B cell (primary cell): ENCODE measurements at regions of chr11 and their contacts with region 1.

Region 1: GRCh38 chr11:118145285-118146227 is 7.1 kb downstream of the SCN4B start:
- DNase-seq: peak; percentile 85
- ATAC-seq: peak; percentile 98
- H3K4me3 ChIP-seq: peak overlapping the region; percentile 15 to 76 (median 61)
- H3K4me3 Mint-ChIP-seq: peak overlapping the region; percentile 87
- H3K27ac ChIP-seq: no peak overlapping the region
- H3K27ac Mint-ChIP-seq: no peak overlapping the region
- H3K4me1 ChIP-seq: peaks cover 0 to 6% of the 10 kb centered on the region in 2 donors
- H3K4me1 Mint-ChIP-seq: peaks cover 7% of the 10 kb centered on the region
- H3K27me3 ChIP-seq: peaks cover 0 to 70% (median 25%) of the 10 kb centered on the region in 4 experiments
- H3K27me3 Mint-ChIP-seq: peaks cover 77% of the 10 kb centered on the region
- CTCF ChIP-seq: peak; percentile 83

Region 2: DNA sequence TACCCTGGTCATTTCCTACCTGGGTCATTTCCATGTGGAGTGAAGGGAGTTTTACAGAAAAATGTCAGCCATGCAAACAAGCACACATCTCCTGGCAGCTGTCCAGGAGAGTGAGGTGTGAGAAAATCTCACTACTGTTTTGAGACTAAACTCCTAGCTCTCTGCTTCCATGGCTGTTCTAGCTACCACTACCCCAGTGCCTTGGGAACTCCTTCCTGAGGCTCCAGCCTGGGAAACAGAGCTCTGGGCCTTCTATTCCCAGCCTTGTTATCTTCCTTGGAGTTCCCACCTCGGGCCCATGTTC is 213.5 kb before region 1 on chr11:
- CTCF ChIA-PET with region 1: no interaction called
- POLR2A ChIA-PET with region 1: no interaction called
- intact Hi-C with region 1: no loop called
- DNase-seq: no peak
- ATAC-seq: no peak
- H3K4me3 ChIP-seq: no peak overlapping the region
- H3K4me3 Mint-ChIP-seq: no peak overlapping the region
- H3K27ac ChIP-seq: no peak overlapping the region
- H3K27ac Mint-ChIP-seq: no peak overlapping the region
- H3K4me1 ChIP-seq: peaks cover 11 to 20% of the 10 kb centered on the region in 2 donors
- H3K4me1 Mint-ChIP-seq: peaks cover 16% of the 10 kb centered on the region
- H3K27me3 ChIP-seq: no peaks in the 10 kb centered on the region
- H3K27me3 Mint-ChIP-seq: peaks cover 9% of the 10 kb centered on the region
- CTCF ChIP-seq: no peak

Region 3: GRCh38 chr11:117997823-117998579 is 147.6 kb before region 1 on chr11:
- CTCF ChIA-PET with region 1: no interaction called
- POLR2A ChIA-PET with region 1: no interaction called
- intact Hi-C with region 1: no loop called
- DNase-seq: no peak
- ATAC-seq: no peak
- H3K4me3 ChIP-seq: no peak overlapping the region
- H3K4me3 Mint-ChIP-seq: no peak overlapping the region
- H3K27ac ChIP-seq: peak overlapping the region; percentile 7 to 52
- H3K27ac Mint-ChIP-seq: peak overlapping the region; percentile 85
- H3K4me1 ChIP-seq: peaks cover 19 to 28% of the 10 kb centered on the region in 2 donors
- H3K4me1 Mint-ChIP-seq: peaks cover 54% of the 10 kb centered on the region
- H3K27me3 ChIP-seq: no peaks in the 10 kb centered on the region
- H3K27me3 Mint-ChIP-seq: no peaks in the 10 kb centered on the region
- CTCF ChIP-seq: no peak

Region 4: DNA sequence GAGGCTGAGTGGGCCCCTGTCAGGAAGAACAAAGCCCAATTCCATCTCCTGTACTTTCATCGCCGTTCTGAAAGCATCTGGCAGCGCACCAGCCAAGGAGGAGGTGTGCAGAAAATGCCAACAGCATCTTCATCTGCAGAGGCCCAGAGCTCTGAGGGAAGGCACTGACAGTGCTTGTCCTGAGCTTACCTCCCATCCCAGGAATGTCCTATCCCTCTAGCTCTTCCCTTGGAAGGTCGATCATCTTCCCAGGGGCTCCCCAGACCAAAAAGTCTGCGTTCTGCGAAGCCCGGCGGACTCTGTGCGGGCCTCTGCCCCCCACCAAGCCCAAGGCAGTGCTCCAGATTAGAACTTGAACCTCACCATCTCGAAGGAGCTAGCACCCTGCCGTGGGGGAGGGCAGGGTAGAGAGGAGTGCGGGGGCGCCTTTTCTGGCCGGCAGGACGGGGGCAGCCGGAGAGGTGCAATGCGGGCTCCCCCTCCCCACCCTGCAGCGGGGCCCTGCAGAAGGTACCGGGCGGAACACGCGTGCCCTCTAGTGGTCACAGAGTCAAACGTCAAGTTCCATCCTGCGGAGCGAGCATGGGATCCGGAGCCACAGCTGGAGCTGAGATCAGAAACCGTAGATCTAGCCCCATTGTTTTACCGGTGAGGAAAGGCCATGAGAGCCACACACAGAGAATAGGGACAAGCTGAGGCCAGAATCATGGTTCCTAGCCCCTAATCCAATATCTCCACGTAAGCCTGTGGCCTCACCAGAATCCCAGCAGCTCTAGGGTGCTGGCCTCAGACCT is 25.9 kb after region 1 on chr11:
- CTCF ChIA-PET with region 1: interaction called, 96 read pairs
- POLR2A ChIA-PET with region 1: no interaction called
- intact Hi-C with region 1: loop called (anchors 1 kb)
- DNase-seq: peak; percentile 77
- ATAC-seq: peak; percentile 88
- H3K4me3 ChIP-seq: no peak overlapping the region
- H3K4me3 Mint-ChIP-seq: no peak overlapping the region
- H3K27ac ChIP-seq: no peak overlapping the region
- H3K27ac Mint-ChIP-seq: no peak overlapping the region
- H3K4me1 ChIP-seq: peaks cover 0 to 5% of the 10 kb centered on the region in 2 donors
- H3K4me1 Mint-ChIP-seq: peaks cover 3% of the 10 kb centered on the region
- H3K27me3 ChIP-seq: peaks cover 0 to 15% (median 1%) of the 10 kb centered on the region in 4 experiments
- H3K27me3 Mint-ChIP-seq: peaks cover 46% of the 10 kb centered on the region
- CTCF ChIP-seq: peak; percentile 96

Region 5: GRCh38 chr11:118290923-118291322 is 145.4 kb after region 1 on chr11:
- CTCF ChIA-PET with region 1: interaction called, 3 read pairs
- POLR2A ChIA-PET with region 1: no interaction called
- intact Hi-C with region 1: loop called (anchors 2 kb)
- DNase-seq: peak; percentile 54
- ATAC-seq: peak; percentile 49
- H3K4me3 ChIP-seq: no peak overlapping the region
- H3K4me3 Mint-ChIP-seq: no peak overlapping the region
- H3K27ac ChIP-seq: no peak overlapping the region
- H3K27ac Mint-ChIP-seq: no peak overlapping the region
- H3K4me1 ChIP-seq: no peaks in the 10 kb centered on the region
- H3K4me1 Mint-ChIP-seq: peaks cover under 1% of the 10 kb centered on the region
- H3K27me3 ChIP-seq: peaks cover 0 to 7% (median 2%) of the 10 kb centered on the region in 4 experiments
- H3K27me3 Mint-ChIP-seq: peaks cover 34% of the 10 kb centered on the region
- CTCF ChIP-seq: peak; percentile 37

Region 6: DNA sequence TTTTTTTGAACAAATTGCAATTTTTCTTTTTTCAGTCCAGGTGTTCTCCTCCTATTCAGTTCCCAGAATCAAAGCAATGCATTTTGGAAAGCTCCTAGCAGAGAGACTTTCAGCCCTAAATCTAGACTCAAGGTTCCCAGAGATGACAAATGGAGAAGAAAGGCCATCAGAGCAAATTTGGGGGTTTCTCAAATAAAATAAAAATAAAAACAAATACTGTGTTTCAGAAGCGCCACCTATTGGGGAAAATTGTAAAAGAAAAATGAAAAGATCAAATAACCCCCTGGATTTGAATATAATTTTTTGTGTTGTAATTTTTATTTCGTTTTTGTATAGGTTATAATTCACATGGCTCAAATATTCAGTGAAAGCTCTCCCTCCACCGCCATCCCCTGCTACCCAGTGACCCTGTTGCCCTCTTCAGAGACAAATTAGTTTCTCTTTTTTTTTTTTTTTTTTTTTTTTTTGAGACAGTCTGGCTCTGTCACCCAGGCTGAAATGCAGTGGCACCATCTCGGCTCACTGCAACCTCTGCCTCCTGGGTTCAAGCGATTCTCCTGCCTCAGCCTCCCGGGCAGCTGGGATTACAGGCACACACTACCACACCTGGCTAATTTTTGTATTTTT is 207.6 kb after region 1 on chr11:
- CTCF ChIA-PET with region 1: no interaction called
- POLR2A ChIA-PET with region 1: no interaction called
- intact Hi-C with region 1: loop called (anchors 1 kb)
- DNase-seq: peak; percentile 64
- ATAC-seq: no peak
- H3K4me3 ChIP-seq: no peak overlapping the region
- H3K4me3 Mint-ChIP-seq: no peak overlapping the region
- H3K27ac ChIP-seq: no peak overlapping the region
- H3K27ac Mint-ChIP-seq: no peak overlapping the region
- H3K4me1 ChIP-seq: no peaks in the 10 kb centered on the region
- H3K4me1 Mint-ChIP-seq: no peaks in the 10 kb centered on the region
- H3K27me3 ChIP-seq: peaks cover 0 to 3% (median 0%) of the 10 kb centered on the region in 4 experiments
- H3K27me3 Mint-ChIP-seq: peaks cover 20% of the 10 kb centered on the region
- CTCF ChIP-seq: peak; percentile 83

Region 7: DNA sequence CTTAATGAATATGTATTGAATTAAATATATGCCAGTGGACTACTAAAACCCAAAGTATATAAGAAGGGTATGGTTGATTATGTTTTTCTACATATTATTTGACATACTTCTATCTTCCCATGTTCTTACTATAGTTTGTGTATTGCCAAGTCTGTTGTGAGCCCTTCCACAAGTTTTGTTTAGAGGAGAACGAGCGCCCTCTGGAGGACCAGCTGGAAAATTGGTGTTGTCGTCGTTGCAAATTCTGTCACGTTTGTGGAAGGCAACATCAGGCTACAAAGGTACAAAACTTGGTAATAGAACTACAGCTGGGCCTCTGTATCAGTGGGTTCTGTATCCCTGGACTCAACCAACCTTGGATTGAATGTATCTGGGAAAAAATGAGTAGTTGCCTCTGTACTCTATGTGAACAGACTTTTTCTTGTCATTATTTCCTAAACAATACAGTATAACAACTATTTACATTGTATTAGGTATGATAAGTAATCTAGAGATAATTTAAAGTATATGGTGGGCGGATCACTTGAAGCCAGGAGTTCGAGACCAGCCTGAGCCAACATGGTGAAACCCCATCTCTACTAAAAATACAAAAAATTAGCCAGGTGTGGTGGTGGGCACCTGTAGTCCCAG is 343.0 kb after region 1 on chr11:
- CTCF ChIA-PET with region 1: interaction called, 13 read pairs
- POLR2A ChIA-PET with region 1: no interaction called
- intact Hi-C with region 1: loop called (anchors 1 kb)
- DNase-seq: peak; percentile 84
- ATAC-seq: peak; percentile 60
- H3K4me3 ChIP-seq: no peak overlapping the region
- H3K4me3 Mint-ChIP-seq: no peak overlapping the region
- H3K27ac ChIP-seq: no peak overlapping the region
- H3K27ac Mint-ChIP-seq: no peak overlapping the region
- H3K4me1 ChIP-seq: no peaks in the 10 kb centered on the region
- H3K4me1 Mint-ChIP-seq: no peaks in the 10 kb centered on the region
- H3K27me3 ChIP-seq: no peaks in the 10 kb centered on the region
- H3K27me3 Mint-ChIP-seq: no peaks in the 10 kb centered on the region
- CTCF ChIP-seq: peak; percentile 92

Region 8: DNA sequence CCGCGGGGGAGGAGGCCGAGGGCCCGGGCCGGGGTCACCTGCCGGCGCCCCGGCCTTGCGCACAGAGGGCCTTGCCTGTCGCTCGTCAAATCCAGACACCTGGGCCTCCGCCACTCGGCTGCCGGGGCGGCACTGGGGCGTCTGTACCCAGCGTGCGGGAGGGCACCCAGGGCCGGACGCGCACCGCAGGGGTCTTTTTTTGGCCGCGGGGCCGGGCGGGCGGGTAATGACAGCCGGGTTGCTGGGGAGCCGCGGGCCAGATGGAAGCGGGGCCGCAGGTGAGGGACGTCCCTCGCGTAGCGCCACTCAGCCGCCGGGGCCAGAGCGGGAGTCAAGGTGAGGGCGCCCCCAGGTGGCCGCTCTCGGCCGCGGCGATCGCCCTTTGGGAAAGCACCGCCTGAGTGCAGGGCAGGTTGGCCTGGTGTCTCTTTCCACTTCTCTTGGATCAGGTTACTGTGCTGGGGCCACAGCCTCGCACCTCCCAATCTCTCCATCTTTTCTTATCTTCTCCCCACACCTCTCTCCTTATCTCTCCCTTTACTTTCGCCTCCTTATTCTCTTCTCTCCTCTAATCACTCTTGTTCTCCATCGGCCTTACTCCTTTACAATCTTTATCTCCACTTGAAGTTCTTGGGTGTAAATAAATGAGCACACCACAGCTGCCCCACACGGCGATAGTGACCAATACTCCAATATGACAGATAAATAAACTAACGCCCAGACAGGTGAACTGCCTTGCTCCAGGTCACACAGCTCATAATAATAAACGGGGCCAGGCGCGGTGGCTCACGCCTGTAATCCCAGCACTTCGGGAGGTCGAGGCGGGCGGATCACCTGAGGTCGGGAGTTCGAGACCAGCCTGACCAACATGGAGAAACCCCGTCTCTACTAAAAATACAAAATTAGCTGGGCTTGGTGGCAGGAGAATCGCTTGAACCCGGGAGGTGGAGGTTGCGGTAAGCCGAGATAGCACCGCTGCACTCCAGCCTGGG is 465.5 kb after region 1 on chr11:
- CTCF ChIA-PET with region 1: no interaction called
- POLR2A ChIA-PET with region 1: interaction called, 10 read pairs
- intact Hi-C with region 1: loop called (anchors 2 kb)
- DNase-seq: peak; percentile 89
- ATAC-seq: peak; percentile 59
- H3K4me3 ChIP-seq: peak overlapping the region in 4 of 5 experiments; percentile 35 to 60 (median 52)
- H3K4me3 Mint-ChIP-seq: peak overlapping the region; percentile 75
- H3K27ac ChIP-seq: no peak overlapping the region
- H3K27ac Mint-ChIP-seq: peak overlapping the region; percentile 59
- H3K4me1 ChIP-seq: peaks cover 26 to 38% of the 10 kb centered on the region in 2 donors
- H3K4me1 Mint-ChIP-seq: peaks cover 25% of the 10 kb centered on the region
- H3K27me3 ChIP-seq: peaks cover 0 to 56% (median 23%) of the 10 kb centered on the region in 4 experiments
- H3K27me3 Mint-ChIP-seq: peaks cover 28% of the 10 kb centered on the region
- CTCF ChIP-seq: peak; percentile 96

Region 9: GRCh38 chr11:118659314-118659952 is 513.9 kb after region 1 on chr11:
- CTCF ChIA-PET with region 1: no interaction called
- POLR2A ChIA-PET with region 1: no interaction called
- intact Hi-C with region 1: loop called (anchors 1 kb)
- DNase-seq: peak; percentile 84
- ATAC-seq: peak; percentile 100
- H3K4me3 ChIP-seq: no peak overlapping the region
- H3K4me3 Mint-ChIP-seq: no peak overlapping the region
- H3K27ac ChIP-seq: no peak overlapping the region
- H3K27ac Mint-ChIP-seq: no peak overlapping the region
- H3K4me1 ChIP-seq: peaks cover 4 to 10% of the 10 kb centered on the region in 2 donors
- H3K4me1 Mint-ChIP-seq: peaks cover 4% of the 10 kb centered on the region
- H3K27me3 ChIP-seq: peaks cover 0 to 14% (median 0%) of the 10 kb centered on the region in 4 experiments
- H3K27me3 Mint-ChIP-seq: peaks cover 7% of the 10 kb centered on the region
- CTCF ChIP-seq: peak; percentile 99